Ovary (tissue), 10 donors: ENCODE measurements at regions of chr5 and their contacts with region 1.

Region 1: GRCh38 chr5:11289740-11290139 is 528.7 kb upstream of the DAP start:
- DNase-seq: no peak
- H3K4me3 ChIP-seq: no peak overlapping the region
- H3K27ac ChIP-seq: no peak overlapping the region
- H3K4me1 ChIP-seq: no peaks in the 10 kb centered on the region
- H3K27me3 ChIP-seq: no peaks in the 10 kb centered on the region
- CTCF ChIP-seq: no peak
- EP300 ChIP-seq: no peak
- POLR2A ChIP-seq: no peak

Region 2: DNA sequence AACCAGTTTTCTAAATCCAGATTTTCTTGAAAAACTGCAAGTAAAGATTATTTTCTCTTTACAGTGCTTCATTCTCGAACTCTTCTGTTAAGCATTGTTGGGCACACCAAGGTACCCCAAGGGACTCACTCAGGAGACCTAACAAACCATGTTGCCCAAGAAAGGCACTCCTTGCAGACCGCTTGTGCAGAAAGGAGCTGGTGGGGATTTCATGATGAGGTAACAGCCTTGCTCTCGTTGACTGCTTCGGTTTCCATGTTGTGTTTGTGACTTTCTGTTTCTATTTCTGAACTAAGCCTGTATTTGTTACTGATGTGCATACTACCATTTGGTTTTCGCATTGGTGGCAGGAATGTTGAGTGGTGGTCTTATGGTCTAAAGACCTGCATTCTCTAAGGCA is 262.1 kb before region 1 on chr5:
- intact Hi-C with region 1: no loop called
- DNase-seq: no peak
- H3K4me3 ChIP-seq: no peak overlapping the region
- H3K27ac ChIP-seq: no peak overlapping the region
- H3K4me1 ChIP-seq: no peaks in the 10 kb centered on the region
- H3K27me3 ChIP-seq: no peaks in the 10 kb centered on the region
- CTCF ChIP-seq: no peak
- EP300 ChIP-seq: no peak
- POLR2A ChIP-seq: no peak

Region 3: GRCh38 chr5:11302663-11303062 is 12.9 kb after region 1 on chr5:
- intact Hi-C with region 1: loop called in 1 of 4 experiments (anchors 2 kb)
- DNase-seq: no peak
- H3K4me3 ChIP-seq: no peak overlapping the region
- H3K27ac ChIP-seq: no peak overlapping the region
- H3K4me1 ChIP-seq: peaks cover 5% of the 10 kb centered on the region
- H3K27me3 ChIP-seq: no peaks in the 10 kb centered on the region
- CTCF ChIP-seq: no peak
- EP300 ChIP-seq: no peak
- POLR2A ChIP-seq: no peak